A673 (cell line): ENCODE measurements at regions of chr21 and their contacts with region 1.

Region 1: GRCh38 chr21:20999659-21000058 is 1.4 kb downstream of the NCAM2 start:
- DNase-seq: peak; percentile 82
- H3K4me3 ChIP-seq: peak overlapping the region; percentile 84
- H3K27ac ChIP-seq: no peak overlapping the region
- H3K4me1 ChIP-seq: peaks cover 18% of the 10 kb centered on the region
- H3K27me3 ChIP-seq: no peaks in the 10 kb centered on the region
- CTCF ChIP-seq: peak; percentile 89

Region 2: GRCh38 chr21:21101911-21102310 is 102.3 kb after region 1 on chr21:
- CTCF ChIA-PET with region 1: no interaction called
- POLR2A ChIA-PET with region 1: interaction called, 5 read pairs
- intact Hi-C with region 1: loop called (anchors 2 kb)
- DNase-seq: peak; percentile 74
- H3K4me3 ChIP-seq: no peak overlapping the region
- H3K27ac ChIP-seq: no peak overlapping the region
- H3K4me1 ChIP-seq: peaks cover 6% of the 10 kb centered on the region
- H3K27me3 ChIP-seq: no peaks in the 10 kb centered on the region
- CTCF ChIP-seq: peak; percentile 61

Region 3: GRCh38 chr21:21163904-21164303 is 164.2 kb after region 1 on chr21:
- CTCF ChIA-PET with region 1: no interaction called
- POLR2A ChIA-PET with region 1: no interaction called
- intact Hi-C with region 1: loop called (anchors 5 kb)
- DNase-seq: peak; percentile 81
- H3K4me3 ChIP-seq: no peak overlapping the region
- H3K27ac ChIP-seq: no peak overlapping the region
- H3K4me1 ChIP-seq: peaks cover 11% of the 10 kb centered on the region
- H3K27me3 ChIP-seq: no peaks in the 10 kb centered on the region
- CTCF ChIP-seq: peak; percentile 72

Region 4: GRCh38 chr21:21373969-21374368 is 374.3 kb after region 1 on chr21:
- CTCF ChIA-PET with region 1: no interaction called
- POLR2A ChIA-PET with region 1: no interaction called
- intact Hi-C with region 1: loop called (anchors 5 kb)
- DNase-seq: peak; percentile 13
- H3K4me3 ChIP-seq: no peak overlapping the region
- H3K27ac ChIP-seq: no peak overlapping the region
- H3K4me1 ChIP-seq: no peaks in the 10 kb centered on the region
- H3K27me3 ChIP-seq: no peaks in the 10 kb centered on the region
- CTCF ChIP-seq: peak; percentile 57

Region 5: DNA sequence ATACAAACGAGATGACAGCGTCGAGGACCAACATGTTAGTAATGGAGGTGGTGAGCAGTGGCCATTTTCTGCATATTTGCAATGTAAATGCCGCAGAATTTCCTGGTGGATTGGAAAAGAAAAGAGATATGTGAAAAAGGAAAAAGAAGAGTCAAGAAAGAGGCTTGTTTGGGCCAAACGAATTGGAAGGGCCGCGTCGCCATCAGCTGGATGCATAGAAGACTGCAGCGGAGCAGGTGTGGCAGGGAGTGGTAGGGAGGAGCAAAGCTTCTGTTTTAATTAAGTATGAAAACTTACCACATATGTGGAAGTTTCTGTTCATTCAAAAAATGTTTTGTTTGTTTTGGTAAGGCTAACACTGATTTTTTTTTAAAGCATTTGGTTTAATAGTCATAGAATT is 689.2 kb after region 1 on chr21:
- CTCF ChIA-PET with region 1: no interaction called
- POLR2A ChIA-PET with region 1: no interaction called
- intact Hi-C with region 1: loop called (anchors 5 kb)
- DNase-seq: peak; percentile 72
- H3K4me3 ChIP-seq: no peak overlapping the region
- H3K27ac ChIP-seq: no peak overlapping the region
- H3K4me1 ChIP-seq: peaks cover 13% of the 10 kb centered on the region
- H3K27me3 ChIP-seq: no peaks in the 10 kb centered on the region
- CTCF ChIP-seq: peak; percentile 82

Region 6: DNA sequence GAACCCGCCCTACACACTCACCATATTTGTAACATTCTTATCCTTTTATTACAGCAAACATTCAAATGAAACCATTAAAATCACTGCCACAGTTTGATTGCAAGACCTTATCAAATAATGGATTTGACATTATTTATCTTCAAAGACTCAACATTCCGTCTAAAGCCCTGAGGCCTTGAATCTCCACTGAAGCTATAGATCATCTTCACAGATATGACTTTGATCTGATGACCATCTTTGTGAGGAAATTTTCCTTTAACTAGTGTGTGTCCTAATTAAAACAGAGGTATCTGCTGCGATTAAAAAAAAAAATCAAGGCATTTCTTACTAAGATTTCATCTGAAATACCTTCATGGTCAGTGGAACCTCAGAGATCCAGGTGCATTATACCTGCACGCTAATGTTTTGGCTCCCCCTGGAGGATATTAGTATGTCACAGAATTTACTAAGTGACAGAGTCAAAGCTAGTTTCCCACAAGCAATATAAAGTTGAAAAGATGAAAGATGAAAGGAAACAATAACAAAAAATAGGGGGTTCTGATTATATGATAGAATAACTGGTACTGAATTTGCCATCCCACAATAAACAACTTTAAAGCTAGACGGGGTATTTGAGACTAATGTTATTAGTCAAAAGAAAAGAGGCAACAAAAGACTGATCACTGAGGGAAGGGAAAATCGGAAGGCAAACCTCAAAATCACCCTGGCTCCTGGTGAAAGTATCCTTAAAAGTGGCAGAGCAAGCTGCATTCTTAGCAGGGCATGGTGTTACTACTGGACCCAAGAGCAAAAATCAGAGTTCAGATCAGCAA is 922.0 kb after region 1 on chr21:
- CTCF ChIA-PET with region 1: no interaction called
- POLR2A ChIA-PET with region 1: no interaction called
- intact Hi-C with region 1: loop called (anchors 10 kb)
- DNase-seq: peak; percentile 34
- H3K4me3 ChIP-seq: no peak overlapping the region
- H3K27ac ChIP-seq: no peak overlapping the region
- H3K4me1 ChIP-seq: peaks cover 6% of the 10 kb centered on the region
- H3K27me3 ChIP-seq: no peaks in the 10 kb centered on the region
- CTCF ChIP-seq: peak; percentile 77